Activated naive CD4-positive, alpha-beta T cell treated with anti-CD3 and anti-CD28 coated beads for 36 hours (primary cell): ENCODE measurements at regions of chr14 and their contacts with region 1.

Region 1: DNA sequence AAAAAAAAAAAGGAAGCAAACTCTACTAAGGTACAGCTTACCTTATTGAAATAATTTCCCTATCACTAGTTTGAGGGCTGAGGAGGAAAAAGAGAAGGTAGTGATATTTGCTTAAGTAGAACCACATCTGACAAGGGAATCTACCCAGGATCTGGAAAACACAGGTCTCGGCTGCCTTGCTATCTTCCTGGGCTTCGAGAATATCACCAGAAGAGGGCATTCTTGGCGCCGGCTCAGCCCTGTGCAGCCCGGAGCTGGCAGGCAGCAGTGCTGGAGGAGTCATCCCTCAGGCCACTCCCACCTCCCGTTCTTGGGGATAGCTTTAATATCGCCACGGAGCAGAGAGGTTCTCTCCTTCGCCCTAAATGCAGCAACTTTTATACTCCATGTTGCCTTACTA is 1181.2 kb downstream of the VRK1 start:
- DNase-seq: peak; percentile 96
- H3K4me3 Mint-ChIP-seq: peak overlapping the region; percentile 82
- H3K27ac Mint-ChIP-seq: peak overlapping the region; percentile 96
- H3K4me1 Mint-ChIP-seq: peaks cover 56% of the 10 kb centered on the region
- H3K27me3 Mint-ChIP-seq: no peaks in the 10 kb centered on the region

Region 2: GRCh38 chr14:97306760-97307246 is 671.5 kb before region 1 on chr14:
- CTCF ChIA-PET with region 1: no interaction called
- intact Hi-C with region 1: loop called (anchors 2 kb)
- DNase-seq: peak; percentile 43
- H3K4me3 Mint-ChIP-seq: no peak overlapping the region
- H3K27ac Mint-ChIP-seq: peak overlapping the region; percentile 90
- H3K4me1 Mint-ChIP-seq: peaks cover 28% of the 10 kb centered on the region
- H3K27me3 Mint-ChIP-seq: no peaks in the 10 kb centered on the region

Region 3: GRCh38 chr14:97620066-97620465 is 358.3 kb before region 1 on chr14:
- CTCF ChIA-PET with region 1: interaction called, 3 read pairs
- intact Hi-C with region 1: loop called (anchors 5 kb)
- DNase-seq: no peak
- H3K4me3 Mint-ChIP-seq: peak overlapping the region; percentile 72
- H3K27ac Mint-ChIP-seq: peak overlapping the region; percentile 76
- H3K4me1 Mint-ChIP-seq: peaks cover 46% of the 10 kb centered on the region
- H3K27me3 Mint-ChIP-seq: no peaks in the 10 kb centered on the region

Region 4: GRCh38 chr14:97994020-97994531 is 15.7 kb after region 1 on chr14:
- CTCF ChIA-PET with region 1: interaction called, 16 read pairs
- intact Hi-C with region 1: loop called (anchors 1 kb)
- DNase-seq: peak; percentile 71
- H3K4me3 Mint-ChIP-seq: peak overlapping the region; percentile 70
- H3K27ac Mint-ChIP-seq: peak overlapping the region; percentile 100
- H3K4me1 Mint-ChIP-seq: peaks cover 82% of the 10 kb centered on the region
- H3K27me3 Mint-ChIP-seq: no peaks in the 10 kb centered on the region

Region 5: GRCh38 chr14:98138666-98139065 is 160.3 kb after region 1 on chr14:
- CTCF ChIA-PET with region 1: interaction called, 95 read pairs
- intact Hi-C with region 1: loop called (anchors 1 kb)
- DNase-seq: peak; percentile 77
- H3K4me3 Mint-ChIP-seq: peak overlapping the region; percentile 71
- H3K27ac Mint-ChIP-seq: peak overlapping the region; percentile 98
- H3K4me1 Mint-ChIP-seq: peaks cover 81% of the 10 kb centered on the region
- H3K27me3 Mint-ChIP-seq: no peaks in the 10 kb centered on the region

Region 6: DNA sequence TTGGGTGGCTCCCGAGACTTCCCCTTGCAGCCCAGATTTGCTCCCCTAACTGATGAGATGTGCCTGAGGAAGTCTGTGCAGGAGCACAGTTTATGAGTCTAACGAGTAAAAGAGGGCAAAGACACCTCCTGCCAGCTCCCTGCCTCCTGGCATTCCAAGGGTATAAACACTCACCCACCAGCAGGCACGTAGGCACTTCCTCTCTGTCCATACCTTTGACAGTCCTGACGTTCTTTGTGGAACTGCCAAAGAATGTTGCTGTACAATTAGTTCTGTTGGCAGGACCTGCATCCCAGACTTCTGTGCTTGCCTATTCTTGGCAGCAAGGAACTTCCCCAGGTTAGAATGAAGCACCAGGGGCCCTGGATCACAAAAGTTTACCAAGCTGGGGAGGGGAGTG is 404.3 kb after region 1 on chr14:
- CTCF ChIA-PET with region 1: no interaction called
- intact Hi-C with region 1: no loop called
- DNase-seq: no peak
- H3K4me3 Mint-ChIP-seq: no peak overlapping the region
- H3K27ac Mint-ChIP-seq: no peak overlapping the region
- H3K4me1 Mint-ChIP-seq: no peaks in the 10 kb centered on the region
- H3K27me3 Mint-ChIP-seq: no peaks in the 10 kb centered on the region

Region 7: DNA sequence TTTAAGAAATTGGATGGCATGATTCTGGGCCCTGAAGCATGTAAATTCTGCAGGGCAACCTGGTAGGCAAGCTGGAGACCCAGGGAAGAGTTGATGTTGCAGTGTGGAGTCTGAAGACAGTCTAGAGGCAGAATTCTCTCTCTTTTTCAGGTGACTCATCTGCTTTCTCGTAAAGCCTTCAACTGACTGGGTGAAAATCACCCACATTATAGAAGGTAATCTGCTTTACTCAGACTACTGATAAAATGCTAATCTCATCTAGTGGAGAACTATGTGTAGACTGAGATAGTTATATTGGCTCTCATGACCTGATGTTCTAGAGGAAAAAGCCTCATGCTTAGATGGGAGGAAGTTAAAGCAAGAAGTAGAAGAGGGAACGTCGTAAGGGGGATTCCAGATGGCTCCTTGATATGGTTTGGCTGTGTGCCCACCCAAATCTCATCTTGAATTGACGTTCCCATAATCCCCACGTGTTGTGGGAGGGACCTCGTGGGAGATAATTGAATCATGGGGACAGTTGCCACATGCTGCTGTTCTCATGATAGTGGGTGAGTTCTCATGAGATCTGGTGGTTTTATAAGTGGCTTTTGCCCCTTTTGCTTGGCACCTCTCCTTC is 569.8 kb after region 1 on chr14:
- CTCF ChIA-PET with region 1: no interaction called
- intact Hi-C with region 1: loop called (anchors 10 kb)
- DNase-seq: peak; percentile 69
- H3K4me3 Mint-ChIP-seq: peak overlapping the region; percentile 22
- H3K27ac Mint-ChIP-seq: peak overlapping the region; percentile 91
- H3K4me1 Mint-ChIP-seq: peaks cover 22% of the 10 kb centered on the region
- H3K27me3 Mint-ChIP-seq: no peaks in the 10 kb centered on the region